CD4-positive, alpha-beta T cell (primary cell): ENCODE measurements at regions of chr6 and their contacts with region 1.

Region 1: GRCh38 chr6:13336553-13336952 is 8.2 kb upstream of the TBC1D7 start:
- DNase-seq: peak; percentile 54 to 84 (median 70)
- ATAC-seq: peak; percentile 87
- H3K4me3 ChIP-seq: no peak overlapping the region
- H3K4me3 Mint-ChIP-seq: no peak overlapping the region
- H3K27ac ChIP-seq: no peak overlapping the region
- H3K27ac Mint-ChIP-seq: no peak overlapping the region
- H3K4me1 ChIP-seq: peaks cover 6% of the 10 kb centered on the region
- H3K4me1 Mint-ChIP-seq: peaks cover 10% of the 10 kb centered on the region
- H3K27me3 ChIP-seq: no peaks in the 10 kb centered on the region
- H3K27me3 Mint-ChIP-seq: no peaks in the 10 kb centered on the region
- CTCF ChIP-seq: peak; percentile 93

Region 2: GRCh38 chr6:13319891-13320564 is 16.5 kb before region 1 on chr6:
- CTCF ChIA-PET with region 1: no interaction called
- POLR2A ChIA-PET with region 1: no interaction called
- intact Hi-C with region 1: no loop called
- DNase-seq: no peak
- ATAC-seq: no peak
- H3K4me3 ChIP-seq: no peak overlapping the region
- H3K4me3 Mint-ChIP-seq: no peak overlapping the region
- H3K27ac ChIP-seq: no peak overlapping the region
- H3K27ac Mint-ChIP-seq: no peak overlapping the region
- H3K4me1 ChIP-seq: no peaks in the 10 kb centered on the region
- H3K4me1 Mint-ChIP-seq: no peaks in the 10 kb centered on the region
- H3K27me3 ChIP-seq: no peaks in the 10 kb centered on the region
- H3K27me3 Mint-ChIP-seq: no peaks in the 10 kb centered on the region
- CTCF ChIP-seq: no peak

Region 3: GRCh38 chr6:13427801-13428582 is 91.4 kb after region 1 on chr6:
- CTCF ChIA-PET with region 1: no interaction called
- POLR2A ChIA-PET with region 1: no interaction called
- intact Hi-C with region 1: loop called in 1 of 2 experiments (anchors 5 kb)
- DNase-seq: peak; percentile 12 to 85 (median 46)
- ATAC-seq: peak; percentile 80
- H3K4me3 ChIP-seq: peak overlapping the region; percentile 42
- H3K4me3 Mint-ChIP-seq: peak overlapping the region; percentile 78
- H3K27ac ChIP-seq: peak overlapping the region in 1 of 2 donors; percentile 59
- H3K27ac Mint-ChIP-seq: peak overlapping the region; percentile 71
- H3K4me1 ChIP-seq: peaks cover 42% of the 10 kb centered on the region
- H3K4me1 Mint-ChIP-seq: peaks cover 53% of the 10 kb centered on the region
- H3K27me3 ChIP-seq: no peaks in the 10 kb centered on the region
- H3K27me3 Mint-ChIP-seq: no peaks in the 10 kb centered on the region
- CTCF ChIP-seq: peak; percentile 40

Region 4: DNA sequence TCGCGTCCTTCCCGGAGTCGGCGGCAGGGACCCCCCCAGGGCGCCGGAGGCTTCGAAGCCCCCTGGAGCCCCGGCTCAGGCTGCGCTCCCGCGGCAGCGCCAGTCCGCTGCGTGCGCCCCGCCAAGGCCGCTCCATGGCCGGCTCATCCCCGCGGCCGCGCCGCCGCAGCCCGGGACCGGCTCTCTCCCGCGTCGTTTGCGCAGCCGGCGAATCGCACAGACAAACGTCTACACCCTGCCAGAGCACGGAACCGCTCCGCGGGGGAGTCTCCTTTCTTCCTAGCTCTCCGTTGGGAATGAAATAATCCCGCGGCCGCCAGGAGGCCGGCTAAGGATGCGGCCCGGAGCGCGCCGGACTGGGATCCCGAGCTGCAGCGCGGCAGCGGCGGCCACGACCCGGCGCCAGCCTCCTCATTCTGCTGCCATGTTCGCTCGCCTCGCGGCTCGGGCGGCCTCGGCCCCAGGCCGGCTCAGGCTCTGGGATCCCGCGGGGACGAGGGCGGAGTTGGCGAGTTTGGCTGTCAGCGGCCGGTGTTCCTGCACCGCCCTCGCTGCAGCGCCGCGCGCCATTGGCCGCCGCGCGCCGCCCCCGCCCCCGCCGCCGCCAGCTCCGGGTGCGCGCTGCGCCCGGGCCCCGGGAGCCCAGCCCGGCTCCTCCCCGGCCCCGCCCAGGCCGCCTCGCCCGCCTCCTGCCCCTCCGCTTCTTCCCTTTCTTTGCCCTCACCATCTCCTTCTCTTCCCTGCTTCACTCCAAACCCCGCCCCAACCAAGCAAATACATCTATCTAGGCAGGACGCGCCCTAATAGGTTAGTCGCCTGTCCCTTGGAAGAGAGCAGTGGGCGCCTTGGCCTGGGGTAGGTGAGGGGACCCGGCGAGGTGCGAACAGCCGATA is 150.8 kb after region 1 on chr6 and contains the start of gene GFOD1:
- CTCF ChIA-PET with region 1: no interaction called
- POLR2A ChIA-PET with region 1: no interaction called
- intact Hi-C with region 1: loop called (anchors 2 to 5 kb)
- DNase-seq: peak; percentile 28 to 86 (median 61)
- ATAC-seq: peak; percentile 76
- H3K4me3 ChIP-seq: peak within 1 kb of the TSS; percentile 67
- H3K4me3 Mint-ChIP-seq: peak within 1 kb of the TSS; percentile 94
- H3K27ac ChIP-seq: no peak within 1 kb of the TSS
- H3K27ac Mint-ChIP-seq: peak within 1 kb of the TSS; percentile 66
- H3K4me1 ChIP-seq: peaks cover 25% of the 10 kb centered on the region
- H3K4me1 Mint-ChIP-seq: peaks cover 29% of the 10 kb centered on the region
- H3K27me3 ChIP-seq: peaks cover 0 to 5% of the 10 kb centered on the region in 2 experiments
- H3K27me3 Mint-ChIP-seq: peaks cover 9% of the 10 kb centered on the region
- CTCF ChIP-seq: no peak
- total RNA-seq, gene GFOD1: 1.3 to 2.0 TPM

Region 5: DNA sequence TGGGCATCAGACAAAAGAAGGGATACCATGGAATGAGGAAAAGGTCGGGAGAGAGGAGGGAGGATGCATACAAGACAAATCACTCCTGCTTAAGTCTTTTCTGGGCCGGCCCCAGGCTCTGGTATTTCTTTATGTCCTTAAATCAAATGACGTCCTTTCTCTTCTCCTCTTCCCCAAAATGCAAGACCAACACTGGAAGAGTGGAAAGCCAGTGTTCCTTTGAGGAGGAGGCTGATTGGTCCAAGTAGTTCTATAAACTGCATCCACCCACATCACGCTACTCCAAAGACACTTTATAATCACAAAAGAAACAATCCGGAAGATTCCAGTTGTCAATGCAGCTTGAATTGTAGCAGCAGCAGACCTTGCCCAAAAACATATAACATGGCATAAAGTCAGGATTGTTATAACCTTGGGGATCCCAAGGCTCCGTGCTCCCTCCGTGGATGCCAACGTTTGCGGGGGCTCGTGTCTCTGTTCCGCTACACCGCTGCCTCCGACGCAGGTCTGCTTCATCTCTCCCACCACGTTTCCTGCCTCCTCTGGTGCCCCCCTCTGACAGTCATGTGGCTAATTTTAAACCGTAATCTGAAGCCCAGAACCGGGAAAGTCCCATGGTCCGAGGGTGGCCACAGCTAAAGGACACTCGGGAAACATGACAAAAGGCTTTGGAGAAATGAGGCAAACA is 430.7 kb after region 1 on chr6:
- CTCF ChIA-PET with region 1: no interaction called
- POLR2A ChIA-PET with region 1: no interaction called
- intact Hi-C with region 1: loop called in 1 of 2 experiments (anchors 5 kb)
- DNase-seq: peak; percentile 12 to 67 (median 38)
- ATAC-seq: peak; percentile 51
- H3K4me3 ChIP-seq: peak overlapping the region; percentile 24
- H3K4me3 Mint-ChIP-seq: peak overlapping the region; percentile 44
- H3K27ac ChIP-seq: no peak overlapping the region
- H3K27ac Mint-ChIP-seq: no peak overlapping the region
- H3K4me1 ChIP-seq: peaks cover 26% of the 10 kb centered on the region
- H3K4me1 Mint-ChIP-seq: peaks cover 38% of the 10 kb centered on the region
- H3K27me3 ChIP-seq: no peaks in the 10 kb centered on the region
- H3K27me3 Mint-ChIP-seq: no peaks in the 10 kb centered on the region
- CTCF ChIP-seq: peak; percentile 55